Activated T-helper 2 cell treated with anti-CD3 and anti-CD28 coated beads, Interferon-gamma antibody, Interleukin-2, Interleukin-4, amounts not matched to agents 10 μg/mL and 5 μg/mL and 100 μg/mL, durations not matched to agents 14 hours and 24 hours and 36 hours (primary cell): ENCODE measurements at regions of chr6 and their contacts with region 1.

Region 1: GRCh38 chr6:34656378-34657036 is 40.1 kb downstream of the ILRUN start:
- DNase-seq: no peak
- H3K4me3 Mint-ChIP-seq: peak overlapping the region; percentile 78
- H3K27ac Mint-ChIP-seq: peak overlapping the region; percentile 97
- H3K4me1 Mint-ChIP-seq: peaks cover 46% of the 10 kb centered on the region
- H3K27me3 Mint-ChIP-seq: no peaks in the 10 kb centered on the region

Region 2: GRCh38 chr6:34575326-34575725 is 81.2 kb before region 1 on chr6:
- intact Hi-C with region 1: no loop called
- DNase-seq: no peak
- H3K4me3 Mint-ChIP-seq: no peak overlapping the region
- H3K27ac Mint-ChIP-seq: no peak overlapping the region
- H3K4me1 Mint-ChIP-seq: no peaks in the 10 kb centered on the region
- H3K27me3 Mint-ChIP-seq: no peaks in the 10 kb centered on the region

Region 3: GRCh38 chr6:34610819-34611477 is 45.6 kb before region 1 on chr6:
- intact Hi-C with region 1: loop called (anchors 5 kb)
- DNase-seq: no peak
- H3K4me3 Mint-ChIP-seq: no peak overlapping the region
- H3K27ac Mint-ChIP-seq: no peak overlapping the region
- H3K4me1 Mint-ChIP-seq: peaks cover 24% of the 10 kb centered on the region
- H3K27me3 Mint-ChIP-seq: no peaks in the 10 kb centered on the region

Region 4: DNA sequence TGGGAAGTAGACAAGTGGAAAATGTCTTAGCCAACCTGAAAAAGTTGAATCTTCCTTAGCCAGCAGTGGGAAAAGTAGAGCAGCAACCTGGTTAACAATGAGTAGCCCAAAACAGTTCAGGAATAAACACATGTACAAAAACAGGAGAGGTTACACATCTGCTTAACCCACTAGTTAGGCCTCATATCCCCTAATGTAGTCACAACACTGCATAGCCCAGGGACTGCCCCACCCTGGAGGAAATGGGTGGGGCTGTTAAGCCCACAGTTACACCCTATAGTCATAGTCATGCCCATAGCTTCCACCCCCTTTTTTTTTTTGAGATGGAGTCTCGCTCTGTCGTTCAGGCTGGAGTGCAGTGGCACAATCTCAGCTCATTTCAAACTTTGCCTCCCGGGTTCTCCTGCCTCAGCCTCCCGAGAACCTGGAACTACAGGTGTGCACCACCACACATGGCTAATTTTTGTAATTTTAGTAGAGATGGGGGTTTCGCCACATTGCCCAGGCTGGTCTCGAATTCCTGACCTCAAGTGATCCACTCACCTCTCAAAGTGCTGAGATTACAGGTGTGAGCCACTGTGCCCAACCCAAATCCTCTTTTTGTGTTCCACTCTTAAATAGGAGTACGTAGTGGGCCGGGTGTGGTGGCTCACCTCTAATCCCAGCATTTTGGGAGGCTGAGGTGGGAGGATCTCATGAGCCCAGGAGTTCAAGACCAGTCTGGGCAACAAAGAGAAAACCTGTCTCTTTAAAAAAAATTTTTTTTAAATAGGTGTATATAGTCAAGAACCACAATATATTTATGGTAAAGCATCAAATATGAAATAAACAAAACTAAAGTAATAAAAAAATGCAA is 15.5 kb after region 1 on chr6:
- intact Hi-C with region 1: loop called (anchors 1 kb)
- DNase-seq: peak; percentile 74
- H3K4me3 Mint-ChIP-seq: peak overlapping the region; percentile 64
- H3K27ac Mint-ChIP-seq: peak overlapping the region; percentile 94
- H3K4me1 Mint-ChIP-seq: peaks cover 47% of the 10 kb centered on the region
- H3K27me3 Mint-ChIP-seq: no peaks in the 10 kb centered on the region

Region 5: DNA sequence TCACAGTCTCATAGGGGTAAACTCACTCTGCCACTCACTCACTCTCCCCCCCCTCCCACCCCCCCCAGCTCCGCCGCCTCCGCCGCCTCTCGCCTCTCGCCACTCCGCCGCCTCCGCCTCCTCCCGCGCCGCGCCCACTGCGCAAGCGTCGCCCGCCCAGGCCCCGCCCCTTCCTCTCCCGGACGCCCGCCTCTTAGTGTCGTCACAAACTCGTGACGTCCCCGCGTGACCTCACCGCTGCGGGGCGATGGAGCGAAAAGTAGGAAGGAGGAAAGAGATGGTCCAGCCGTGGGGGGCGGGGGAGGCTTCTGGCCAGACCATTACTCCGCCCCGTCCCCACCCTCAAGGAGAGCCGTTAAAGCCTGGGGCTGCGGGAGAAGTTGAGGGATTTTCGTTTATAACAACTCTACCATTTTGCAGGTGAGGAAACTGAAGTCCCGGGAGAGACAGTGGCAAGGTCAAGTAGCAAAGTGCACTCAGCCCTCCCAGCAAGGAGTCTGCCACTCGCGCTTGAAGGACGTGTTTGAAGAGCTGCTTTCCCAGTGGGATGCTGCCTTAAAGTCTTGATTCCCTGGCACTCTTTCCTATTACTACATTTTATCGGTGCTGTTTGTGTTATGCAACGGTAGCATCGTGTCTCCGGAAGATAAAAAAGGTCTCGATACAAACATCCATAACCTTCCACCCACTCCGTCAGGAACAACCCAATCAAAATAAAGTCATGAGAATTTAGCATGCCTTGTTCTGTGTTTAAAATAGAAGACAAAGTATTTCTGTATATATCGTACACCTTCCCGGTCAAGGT is 40.4 kb after region 1 on chr6 and contains the start of gene ILRUN:
- intact Hi-C with region 1: loop called (anchors 2 kb)
- DNase-seq: peak; percentile 91
- H3K4me3 Mint-ChIP-seq: peak within 1 kb of the TSS; percentile 92
- H3K27ac Mint-ChIP-seq: peak within 1 kb of the TSS; percentile 91
- H3K4me1 Mint-ChIP-seq: peaks cover 34% of the 10 kb centered on the region
- H3K27me3 Mint-ChIP-seq: no peaks in the 10 kb centered on the region
- total RNA-seq, gene ILRUN: 68.7 and 72.9 TPM in 2 replicates